ENCODE measurements at regions of chr2 and their contacts with region 1.

Region 1: GRCh38 chr2:202577250-202578183 is 57.3 kb upstream of the FAM117B start:
- DNase-seq: no peak

Region 2: DNA sequence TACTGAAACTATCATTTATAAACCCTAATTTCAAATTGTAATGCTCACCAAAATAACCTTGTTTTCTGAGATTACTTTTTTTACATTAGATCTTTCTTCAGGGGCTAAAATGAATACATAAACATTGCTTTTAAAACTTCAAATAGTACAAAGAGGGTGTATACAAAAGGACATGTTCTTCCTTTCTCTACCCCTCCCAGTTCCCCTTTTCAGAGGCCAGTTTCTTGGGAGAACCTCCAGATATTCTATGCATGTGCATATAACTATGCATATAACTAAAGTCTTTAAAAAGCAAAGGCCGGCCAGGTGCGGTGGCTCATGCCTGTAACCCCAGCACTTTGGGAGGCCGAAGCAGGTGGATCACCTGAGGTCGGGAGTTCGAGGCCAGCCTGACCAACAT is 46.6 kb after region 1 on chr2:
- intact Hi-C with region 1: no loop called
- DNase-seq: peak in 1 of 10 donors; percentile 53

Region 3: DNA sequence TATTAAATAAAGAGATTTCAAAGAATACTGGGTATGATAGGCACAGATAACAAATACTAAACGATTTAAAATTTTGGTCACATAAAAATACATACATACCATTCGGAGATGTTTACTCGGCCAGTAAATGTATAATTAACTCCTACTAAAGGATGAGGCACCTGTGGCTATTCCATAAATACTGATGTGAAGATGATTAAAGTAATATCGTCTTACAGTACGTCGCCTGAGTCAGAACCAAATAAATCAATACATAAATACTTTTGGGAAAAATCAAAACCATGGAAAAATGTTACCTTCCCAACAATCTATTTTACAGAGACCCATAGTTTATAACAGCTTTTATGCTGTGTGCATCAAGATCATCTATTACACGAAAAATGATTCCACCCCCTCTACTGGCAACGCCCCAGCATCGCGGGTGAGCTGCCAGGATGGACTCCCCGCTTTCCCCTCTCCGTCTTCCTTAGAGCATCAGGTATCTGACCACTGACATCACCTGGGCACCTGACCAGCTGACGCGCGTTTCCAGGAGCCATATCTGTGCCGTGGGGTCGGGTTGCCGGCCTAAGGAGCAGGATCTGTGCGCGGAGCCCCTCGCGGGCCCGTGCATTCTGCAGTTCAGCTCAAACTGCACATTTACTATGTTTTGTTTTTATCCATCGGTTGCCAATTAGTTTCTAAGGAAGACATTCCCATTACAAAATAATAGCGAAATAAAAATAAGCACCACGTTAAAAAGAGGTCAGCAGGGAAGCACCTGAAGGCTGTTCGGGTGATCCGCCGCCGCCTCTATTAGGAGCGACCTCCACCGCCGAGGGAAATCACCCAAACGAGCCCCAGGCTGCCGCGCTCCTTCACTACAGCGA is 293.1 kb after region 1 on chr2:
- intact Hi-C with region 1: loop called (anchors 10 kb)
- DNase-seq: peak; percentile 37 to 92 (median 56)

Region 4: DNA sequence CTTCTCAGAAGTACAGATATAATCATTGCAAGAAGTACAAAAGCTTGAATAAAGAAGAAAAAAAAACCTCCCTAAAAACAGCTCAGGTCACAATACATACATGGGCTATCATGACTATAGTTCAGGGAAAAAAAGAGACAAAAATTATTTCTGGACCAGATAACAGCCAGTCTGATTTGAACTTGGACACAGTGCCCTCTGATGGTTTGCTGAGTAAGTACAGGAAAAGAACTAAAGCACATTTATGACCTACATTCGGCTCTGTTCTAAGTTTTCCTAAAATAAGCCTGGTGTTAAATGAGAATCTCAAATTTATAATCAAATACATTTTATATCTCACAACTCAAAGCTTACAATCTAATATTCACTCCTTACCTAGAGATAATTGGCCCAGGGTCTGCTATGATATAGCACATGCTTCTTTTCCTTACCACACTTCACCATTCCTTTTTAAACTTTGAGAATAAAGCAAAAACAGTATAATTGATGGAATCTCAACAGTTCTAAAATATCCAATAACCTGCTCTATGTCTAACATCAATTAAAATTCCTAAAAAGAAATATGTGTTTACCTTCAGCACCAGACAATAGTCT is 876.4 kb after region 1 on chr2:
- intact Hi-C with region 1: loop called (anchors 5 kb)
- DNase-seq: peak in 1 of 10 donors; percentile 20

Measured in posterior cingulate gyrus (tissue), 11 donors.